Naive thymus-derived CD8-positive, alpha-beta T cell (primary cell): ENCODE measurements at regions of chr15 and their contacts with region 1.

Region 1: GRCh38 chr15:40307421-40308211 is at the start of gene PLCB2:
- DNase-seq: peak; percentile 52 to 85 (median 70)
- ATAC-seq: peak; percentile 81 to 83
- H3K4me3 Mint-ChIP-seq: peak within 1 kb of the TSS; percentile 94 to 98 (median 96)
- H3K27ac Mint-ChIP-seq: peak within 1 kb of the TSS; percentile 93 to 98 (median 97)
- H3K4me1 Mint-ChIP-seq: peaks cover 30 to 58% (median 55%) of the 10 kb centered on the region in 4 donors
- H3K27me3 Mint-ChIP-seq: no peaks in the 10 kb centered on the region
- polyA plus RNA-seq, gene PLCB2: 14.5 to 23.0 (median 22.2) TPM

Region 2: DNA sequence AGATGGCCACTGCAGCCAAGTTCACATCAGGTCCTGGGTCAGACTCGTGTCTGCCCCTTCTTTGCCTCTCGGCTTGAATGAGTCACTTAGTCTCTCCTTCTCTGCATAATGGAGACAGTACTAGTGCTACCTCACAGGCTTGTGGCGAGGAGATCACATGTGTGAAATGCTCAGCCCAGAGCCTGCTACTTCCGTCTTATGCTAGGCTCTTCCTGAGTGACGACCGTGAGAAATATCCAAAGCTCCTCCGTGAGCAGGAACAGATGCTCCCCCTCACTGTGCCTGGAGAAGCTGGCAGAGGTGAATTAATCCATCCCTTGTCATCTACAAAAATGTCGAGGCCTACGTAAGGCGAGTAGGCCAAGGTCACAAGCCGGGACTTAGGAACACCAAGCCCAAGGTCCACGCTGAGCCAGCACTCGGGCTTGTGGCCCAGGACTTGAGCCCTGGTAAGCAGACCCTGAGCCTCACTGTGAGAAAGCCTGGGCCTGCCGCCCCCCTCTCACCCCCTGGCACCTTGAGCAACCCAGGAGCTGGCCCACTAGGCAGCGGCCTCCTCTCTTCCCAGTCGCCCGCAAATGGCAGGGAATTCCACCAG is 50.9 kb before region 1 on chr15:
- POLR2A ChIA-PET with region 1: no interaction called
- DNase-seq: no peak
- ATAC-seq: no peak
- H3K4me3 Mint-ChIP-seq: peak overlapping the region in 1 of 10 donors; percentile 52
- H3K27ac Mint-ChIP-seq: peak overlapping the region in 2 of 10 donors; percentile 47 to 84
- H3K4me1 Mint-ChIP-seq: peaks cover 1 to 9% (median 6%) of the 10 kb centered on the region in 4 donors
- H3K27me3 Mint-ChIP-seq: peaks cover 6 to 33% (median 18%) of the 10 kb centered on the region in 5 donors

Region 3: DNA sequence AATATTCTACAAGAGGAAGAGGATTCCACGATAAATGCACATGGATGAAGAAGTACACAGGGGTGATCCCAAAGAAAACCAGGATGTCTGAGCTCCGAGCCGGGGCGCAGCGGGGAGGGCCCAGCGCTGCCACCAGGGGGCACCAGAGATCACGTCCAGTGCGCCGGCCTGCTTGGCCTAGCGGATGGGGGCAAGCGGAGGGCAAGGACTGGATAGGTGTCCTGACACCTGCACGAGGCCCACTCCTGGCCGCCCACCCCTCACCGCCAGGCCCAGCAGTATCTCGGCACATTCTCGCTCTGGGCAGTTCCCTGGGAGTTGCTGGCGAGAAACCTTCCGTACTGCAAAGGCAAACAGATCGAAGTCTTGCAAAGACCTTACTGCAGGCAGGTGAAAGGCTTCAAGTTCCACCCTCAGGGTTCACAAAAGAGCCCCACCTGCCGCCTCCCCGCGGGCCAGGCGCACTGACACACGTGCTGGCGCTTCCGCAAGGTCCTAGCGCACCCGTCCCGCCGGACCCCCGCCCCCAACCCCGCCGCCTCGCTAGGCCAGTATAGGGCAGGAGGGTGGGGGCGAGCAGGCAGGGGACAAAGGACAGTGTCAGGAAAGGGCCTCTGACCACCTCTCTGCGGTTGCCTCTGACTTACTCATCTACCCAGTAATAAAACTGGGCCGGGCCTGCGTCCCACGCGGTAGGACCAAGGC is 28.0 kb before region 1 on chr15:
- POLR2A ChIA-PET with region 1: interaction called, 45 read pairs
- DNase-seq: peak; percentile 29 to 79 (median 66)
- ATAC-seq: peak in 1 of 2 donors; percentile 34
- H3K4me3 Mint-ChIP-seq: peak overlapping the region in 2 of 10 donors; percentile 38 to 42
- H3K27ac Mint-ChIP-seq: no peak overlapping the region
- H3K4me1 Mint-ChIP-seq: peaks cover 0 to 29% (median 9%) of the 10 kb centered on the region in 4 donors
- H3K27me3 Mint-ChIP-seq: peaks cover 5 to 50% (median 16%) of the 10 kb centered on the region in 5 donors

Region 4: DNA sequence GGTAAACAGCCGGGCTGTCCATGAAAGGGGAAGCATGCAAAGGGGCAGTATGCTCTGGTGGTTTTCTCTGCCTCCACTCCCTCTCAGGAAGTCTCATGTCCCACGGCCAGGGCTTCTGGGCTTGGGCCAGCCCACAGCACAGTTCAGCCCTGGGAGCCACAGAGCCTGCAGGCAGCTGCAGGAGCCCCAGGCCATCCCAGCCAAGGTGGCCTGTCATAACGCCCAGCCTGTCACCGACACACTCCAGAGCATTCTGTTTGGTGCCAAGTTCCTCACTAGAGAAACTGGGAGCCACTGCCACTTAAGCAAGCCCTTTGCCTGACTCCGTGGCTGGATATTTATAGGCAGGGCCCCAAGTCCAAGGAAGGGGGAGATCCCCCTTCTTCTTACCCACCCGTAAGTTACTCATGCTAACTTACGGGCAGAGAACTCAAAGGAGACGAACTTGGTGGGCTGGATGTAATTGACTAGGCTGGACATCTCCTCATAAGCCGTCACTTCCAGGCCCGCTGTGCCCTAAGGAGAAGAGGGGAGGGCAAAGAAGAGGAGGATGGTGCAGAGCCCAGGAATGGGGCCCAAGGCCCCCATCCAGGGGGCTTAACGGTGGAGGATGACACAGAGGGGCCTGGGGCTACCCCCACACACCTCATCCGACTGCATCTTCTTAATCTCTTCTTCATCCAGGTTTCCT is 11.6 kb before region 1 on chr15:
- POLR2A ChIA-PET with region 1: interaction called, 13 read pairs
- DNase-seq: no peak
- ATAC-seq: no peak
- H3K4me3 Mint-ChIP-seq: no peak overlapping the region
- H3K27ac Mint-ChIP-seq: peak overlapping the region in 1 of 10 donors; percentile 83
- H3K4me1 Mint-ChIP-seq: peaks cover 0 to 3% (median 0%) of the 10 kb centered on the region in 4 donors
- H3K27me3 Mint-ChIP-seq: no peaks in the 10 kb centered on the region

Region 5: GRCh38 chr15:40323239-40323952 is 15.8 kb after region 1 on chr15 and contains the start of gene INAFM2:
- POLR2A ChIA-PET with region 1: interaction called, 104 read pairs
- DNase-seq: peak; percentile 85 to 94 (median 91)
- ATAC-seq: peak; percentile 91 to 94
- H3K4me3 Mint-ChIP-seq: peak within 1 kb of the TSS; percentile 71 to 92 (median 82)
- H3K27ac Mint-ChIP-seq: peak within 1 kb of the TSS in 9 of 10 donors; percentile 28 to 85 (median 64)
- H3K4me1 Mint-ChIP-seq: peaks cover 19 to 46% (median 36%) of the 10 kb centered on the region in 4 donors
- H3K27me3 Mint-ChIP-seq: peaks cover 0 to 6% (median 0%) of the 10 kb centered on the region in 5 donors
- polyA plus RNA-seq, gene INAFM2: 0.69 to 2.5 (median 1.9) TPM

Region 6: GRCh38 chr15:40338041-40338657 is 30.5 kb after region 1 on chr15:
- POLR2A ChIA-PET with region 1: interaction called, 48 read pairs
- DNase-seq: peak; percentile 64 to 87 (median 73)
- ATAC-seq: peak; percentile 89 to 94
- H3K4me3 Mint-ChIP-seq: peak overlapping the region in 5 of 10 donors; percentile 6 to 57 (median 22)
- H3K27ac Mint-ChIP-seq: peak overlapping the region in 3 of 10 donors; percentile 2 to 87 (median 45)
- H3K4me1 Mint-ChIP-seq: peaks cover 15 to 27% (median 26%) of the 10 kb centered on the region in 4 donors
- H3K27me3 Mint-ChIP-seq: peaks cover 0 to 5% (median 1%) of the 10 kb centered on the region in 5 donors

Region 7: GRCh38 chr15:40405501-40406381 is 98.1 kb after region 1 on chr15 and contains the start of gene IVD:
- POLR2A ChIA-PET with region 1: interaction called, 10 read pairs
- DNase-seq: peak; percentile 84 to 95 (median 88)
- ATAC-seq: peak; percentile 99
- H3K4me3 Mint-ChIP-seq: peak within 1 kb of the TSS; percentile 84 to 96 (median 92)
- H3K27ac Mint-ChIP-seq: peak within 1 kb of the TSS; percentile 58 to 97 (median 87)
- H3K4me1 Mint-ChIP-seq: peaks cover 12 to 45% (median 35%) of the 10 kb centered on the region in 4 donors
- H3K27me3 Mint-ChIP-seq: no peaks in the 10 kb centered on the region
- polyA plus RNA-seq, gene IVD: 48.2 to 77.7 (median 49.5) TPM

Region 8: GRCh38 chr15:40454904-40455391 is 147.3 kb after region 1 on chr15:
- POLR2A ChIA-PET with region 1: no interaction called
- DNase-seq: peak in 1 of 10 donors; percentile 12
- ATAC-seq: peak; percentile 3 to 41
- H3K4me3 Mint-ChIP-seq: peak overlapping the region; percentile 79 to 94 (median 87)
- H3K27ac Mint-ChIP-seq: peak overlapping the region; percentile 83 to 98 (median 94)
- H3K4me1 Mint-ChIP-seq: peaks cover 59 to 79% (median 75%) of the 10 kb centered on the region in 4 donors
- H3K27me3 Mint-ChIP-seq: no peaks in the 10 kb centered on the region